ENCODE measurements at regions of chr6 and their contacts with region 1.

Region 1: DNA sequence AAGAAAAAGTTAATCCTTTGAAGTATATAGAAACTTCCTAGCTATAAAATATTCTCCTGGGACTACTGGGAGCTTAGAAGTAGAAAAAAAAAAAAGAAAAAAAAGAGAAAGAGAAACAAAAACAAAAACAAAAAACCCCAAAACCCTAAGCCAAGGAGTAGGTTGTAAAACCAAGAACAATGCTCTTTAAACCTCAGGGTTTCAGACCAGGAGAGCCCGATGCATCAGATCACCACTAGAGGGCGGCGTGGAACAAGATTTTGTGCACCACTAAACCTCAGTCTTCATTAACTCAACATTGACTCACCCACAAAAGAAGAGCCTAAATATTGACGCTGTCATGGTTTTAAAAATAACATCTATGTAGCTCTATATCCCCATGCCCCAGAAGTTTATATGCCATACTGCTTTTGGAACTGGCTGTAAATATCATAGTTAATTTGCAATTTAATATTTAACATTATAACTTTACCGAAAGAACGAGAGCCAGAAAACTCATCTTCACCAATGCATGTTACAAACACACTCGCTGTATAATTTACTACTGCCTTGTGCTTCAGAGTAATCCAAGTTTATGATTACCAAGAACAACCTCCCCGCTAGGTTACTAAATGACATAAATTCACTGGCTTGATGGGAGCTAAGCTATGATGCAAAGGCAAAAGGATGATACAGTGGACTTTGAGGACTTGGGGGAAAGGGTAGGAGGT is 19.2 kb downstream of the MCUR1 start:
- DNase-seq: peak; percentile 56
- H3K4me3 ChIP-seq: no peak overlapping the region
- H3K27ac ChIP-seq: no peak overlapping the region
- H3K27me3 ChIP-seq: no peaks in the 10 kb centered on the region
- CTCF ChIP-seq: peak; percentile 95

Region 2: DNA sequence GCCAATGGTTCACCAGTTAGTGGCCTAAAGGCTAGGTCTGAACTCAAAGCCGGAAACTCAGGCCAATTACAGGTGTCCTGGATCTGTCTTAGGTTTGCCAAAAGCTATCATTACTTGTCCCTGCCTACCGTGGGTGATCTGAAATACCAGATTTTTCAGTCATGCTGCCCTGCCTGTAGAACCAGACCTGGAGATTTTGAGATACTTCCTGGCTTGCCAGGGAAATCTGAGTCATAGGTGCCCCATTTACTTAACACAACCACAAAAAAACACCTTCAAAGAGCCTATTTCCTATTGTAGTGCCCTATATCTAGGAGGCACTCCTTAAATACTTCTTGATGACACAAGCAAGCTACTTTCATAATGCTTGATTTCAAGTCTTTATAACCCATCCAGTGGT is 69.6 kb before region 1 on chr6:
- CTCF ChIA-PET with region 1: interaction called, 21 read pairs
- POLR2A ChIA-PET with region 1: no interaction called
- DNase-seq: no peak
- H3K4me3 ChIP-seq: no peak overlapping the region
- H3K27ac ChIP-seq: no peak overlapping the region
- H3K27me3 ChIP-seq: no peaks in the 10 kb centered on the region
- CTCF ChIP-seq: no peak

Region 3: GRCh38 chr6:13769664-13770063 is 25.5 kb before region 1 on chr6:
- CTCF ChIA-PET with region 1: interaction called, 15 read pairs
- POLR2A ChIA-PET with region 1: no interaction called
- DNase-seq: no peak
- H3K4me3 ChIP-seq: no peak overlapping the region
- H3K27ac ChIP-seq: no peak overlapping the region
- H3K27me3 ChIP-seq: no peaks in the 10 kb centered on the region
- CTCF ChIP-seq: 0 out of 2 replicates have a peak, but pooled peaks have one; percentile 12

Region 4: DNA sequence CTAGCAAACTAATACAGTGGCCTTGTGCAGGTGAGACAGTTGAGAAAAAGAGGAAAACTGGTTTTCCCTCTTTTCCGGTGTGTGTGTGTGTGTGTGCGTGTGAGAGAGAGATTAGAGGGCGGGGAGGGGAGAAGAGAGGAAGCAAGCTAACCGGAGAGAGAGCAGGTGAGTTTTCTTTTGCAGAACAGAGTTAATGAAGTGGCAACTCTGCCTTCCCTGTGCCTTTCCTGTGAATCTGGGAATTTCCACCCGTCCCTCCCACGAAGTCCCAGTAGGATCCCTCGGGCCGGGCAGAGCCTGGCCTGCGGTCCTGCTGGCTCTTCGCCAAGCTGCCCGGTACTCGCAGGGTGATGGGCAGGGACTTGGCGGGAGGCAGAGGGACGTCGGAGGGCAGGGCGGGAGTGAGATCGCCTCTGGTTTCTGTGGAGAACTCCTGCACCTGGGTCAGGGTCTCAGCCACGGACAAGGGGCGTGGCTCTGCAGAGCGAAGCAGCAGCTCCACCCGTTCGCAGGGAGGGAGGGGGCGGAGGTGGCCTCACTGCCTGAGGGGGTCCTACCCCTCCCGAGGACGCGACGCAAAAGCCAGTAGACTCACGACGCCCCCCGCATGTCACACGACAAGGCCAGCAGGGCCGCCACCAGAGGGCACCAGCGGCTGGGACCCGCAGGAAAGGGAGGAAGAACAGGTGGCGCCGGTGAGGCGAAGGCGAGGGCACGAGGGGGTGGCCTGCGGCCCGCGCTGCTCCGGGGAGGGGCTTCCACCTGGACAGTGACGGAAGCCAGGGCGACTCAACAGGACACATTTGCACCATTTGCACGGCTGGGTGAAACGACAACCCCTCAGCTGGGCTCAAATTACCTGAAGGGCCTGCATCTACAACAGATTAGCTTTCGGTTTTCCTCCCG is 78.3 kb after region 1 on chr6:
- CTCF ChIA-PET with region 1: interaction called, 14 read pairs
- POLR2A ChIA-PET with region 1: no interaction called
- DNase-seq: no peak
- H3K4me3 ChIP-seq: peak overlapping the region; percentile 59
- H3K27ac ChIP-seq: no peak overlapping the region
- H3K27me3 ChIP-seq: peaks cover 15% of the 10 kb centered on the region
- CTCF ChIP-seq: peak; percentile 67

Region 5: GRCh38 chr6:13941902-13942301 is 146.7 kb after region 1 on chr6:
- CTCF ChIA-PET with region 1: no interaction called
- POLR2A ChIA-PET with region 1: no interaction called
- DNase-seq: no peak
- H3K4me3 ChIP-seq: no peak overlapping the region
- H3K27ac ChIP-seq: no peak overlapping the region
- H3K27me3 ChIP-seq: no peaks in the 10 kb centered on the region
- CTCF ChIP-seq: no peak

Region 6: DNA sequence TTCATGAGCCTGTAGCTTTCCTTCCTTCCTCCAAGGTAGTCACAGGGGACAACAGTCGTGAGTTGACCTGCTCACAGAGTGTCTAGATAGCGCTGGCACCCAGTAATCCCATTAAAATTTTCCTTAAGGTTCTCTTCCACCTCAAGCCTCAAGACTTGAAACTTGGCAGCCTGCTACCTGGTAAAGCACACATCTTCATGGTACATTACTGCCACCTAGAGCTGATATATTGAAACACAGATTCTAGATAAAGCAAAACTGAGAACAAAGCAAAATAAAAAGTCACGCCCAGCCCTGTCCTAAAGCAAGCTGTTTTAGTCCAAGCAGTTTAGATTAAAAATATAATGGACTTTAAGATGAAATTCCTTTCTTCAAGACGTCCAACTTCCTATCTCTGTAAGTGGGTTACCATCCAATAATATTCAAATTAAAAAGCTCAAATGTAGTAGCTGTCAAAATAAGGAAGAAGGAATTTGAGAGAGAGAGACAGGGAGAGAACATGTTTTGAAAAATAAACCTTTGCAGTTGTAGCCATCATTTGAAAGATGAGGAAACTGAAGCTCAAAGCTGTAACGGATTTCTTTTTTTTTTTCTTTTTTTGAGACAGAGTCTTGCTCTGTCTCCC is 271.7 kb after region 1 on chr6:
- CTCF ChIA-PET with region 1: interaction called, 121 read pairs
- POLR2A ChIA-PET with region 1: no interaction called
- DNase-seq: peak; percentile 55
- H3K4me3 ChIP-seq: no peak overlapping the region
- H3K27ac ChIP-seq: no peak overlapping the region
- H3K27me3 ChIP-seq: no peaks in the 10 kb centered on the region
- CTCF ChIP-seq: peak; percentile 64

Measured in AG04450 (cell line).